Left lung (tissue), 14 donors: ENCODE measurements at regions of chr1 and their contacts with region 1.

Region 1: GRCh38 chr1:50458507-50458906 is 35.3 kb upstream of the DMRTA2 start:
- DNase-seq: no peak
- ATAC-seq: no peak
- H3K4me3 ChIP-seq: no peak overlapping the region
- H3K27ac ChIP-seq: no peak overlapping the region
- H3K4me1 ChIP-seq: peaks cover 0 to 8% of the 10 kb centered on the region in 2 donors
- H3K27me3 ChIP-seq: no peaks in the 10 kb centered on the region
- CTCF ChIP-seq: no peak

Region 2: GRCh38 chr1:50181027-50181663 is 277.4 kb before region 1 on chr1:
- intact Hi-C with region 1: no loop called
- DNase-seq: peak in 1 of 4 donors; percentile 17
- ATAC-seq: peak; percentile 86
- H3K4me3 ChIP-seq: no peak overlapping the region
- H3K27ac ChIP-seq: no peak overlapping the region
- H3K4me1 ChIP-seq: no peaks in the 10 kb centered on the region
- H3K27me3 ChIP-seq: peaks cover 0 to 14% of the 10 kb centered on the region in 2 donors
- CTCF ChIP-seq: no peak

Region 3: DNA sequence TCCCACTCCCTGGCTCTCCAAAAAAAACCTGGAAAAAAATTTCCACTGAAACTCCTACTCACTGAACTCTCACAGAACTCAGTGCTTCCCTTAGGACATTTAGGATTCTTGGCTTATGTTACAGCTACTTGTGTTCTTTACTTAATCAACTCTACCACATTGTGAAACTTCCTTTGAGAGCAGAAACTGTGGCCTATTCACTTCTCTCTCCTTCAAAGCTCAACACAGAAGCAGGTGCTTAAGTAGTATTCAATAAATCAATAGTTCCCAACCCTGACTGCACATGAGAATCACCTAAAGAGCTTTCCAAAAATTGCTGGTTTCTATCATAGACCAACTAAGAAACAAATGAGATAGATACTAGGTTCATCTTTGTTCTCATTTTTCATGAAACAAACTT is 32.6 kb after region 1 on chr1:
- intact Hi-C with region 1: loop called in 1 of 2 experiments (anchors 5 kb)
- DNase-seq: no peak
- ATAC-seq: peak; percentile 41
- H3K4me3 ChIP-seq: no peak overlapping the region
- H3K27ac ChIP-seq: no peak overlapping the region
- H3K4me1 ChIP-seq: no peaks in the 10 kb centered on the region
- H3K27me3 ChIP-seq: no peaks in the 10 kb centered on the region
- CTCF ChIP-seq: no peak